ENCODE measurements at regions of chr5 and their contacts with region 1.

Region 1: DNA sequence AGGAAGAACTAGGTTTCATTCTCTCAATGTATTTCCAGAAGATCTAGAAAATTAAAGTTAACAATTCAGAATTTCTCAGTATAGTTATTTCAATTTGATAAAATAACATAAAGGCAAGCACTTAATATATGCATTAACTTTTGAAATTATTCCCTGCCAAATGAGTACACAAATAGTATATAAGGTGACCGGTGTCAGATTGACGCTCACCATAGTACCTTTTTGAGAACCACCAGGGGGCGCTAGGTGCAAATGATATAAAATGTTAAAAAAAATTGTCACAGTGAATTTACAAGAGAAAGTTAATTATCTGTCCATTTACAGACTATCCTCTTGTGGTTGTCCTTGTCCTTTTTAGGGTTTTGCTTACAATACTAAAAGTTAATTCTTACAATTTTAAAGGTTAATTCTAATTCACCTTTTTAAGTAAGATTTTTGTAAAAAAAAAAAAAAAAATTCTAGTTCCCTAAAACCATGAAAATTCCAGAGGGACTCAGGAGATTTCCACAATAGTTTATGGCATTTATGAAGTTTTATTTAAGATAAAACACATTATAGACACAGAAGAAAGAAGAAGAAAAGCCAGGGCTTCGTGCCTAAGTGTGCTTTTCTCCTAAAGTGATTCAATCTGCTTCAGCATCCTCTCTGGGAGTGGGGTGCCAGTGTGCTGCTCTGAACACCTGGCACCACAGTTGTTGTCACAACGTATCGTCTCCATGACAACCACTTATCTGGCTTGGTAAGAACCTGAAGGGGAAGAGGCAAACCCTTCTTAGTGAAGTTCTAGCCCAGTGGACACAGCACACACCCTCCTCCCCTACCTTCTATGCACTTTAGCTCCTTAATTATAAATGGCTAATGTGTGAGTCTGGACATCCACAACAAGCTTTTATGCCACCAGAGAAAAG is 1.7 kb downstream of the ADAMTS16 start:
- ATAC-seq: peak in 3 of 8 experiments; percentile 27 to 39 (median 35)
- H3K4me3 ChIP-seq: no peak overlapping the region
- H3K27ac ChIP-seq: no peak overlapping the region
- H3K4me1 ChIP-seq: peaks cover 4% of the 10 kb centered on the region in 2 donors

Region 2: GRCh38 chr5:4879693-4880303 is 262.1 kb before region 1 on chr5:
- in situ Hi-C with region 1: loop called in 5 of 9 experiments (anchors 10 to 25 kb)
- ATAC-seq: peak; percentile 63 to 94 (median 84)
- H3K4me3 ChIP-seq: no peak overlapping the region
- H3K27ac ChIP-seq: no peak overlapping the region
- H3K4me1 ChIP-seq: peaks cover 0 to 10% of the 10 kb centered on the region in 2 donors

Region 3: GRCh38 chr5:5398046-5398445 is 256.2 kb after region 1 on chr5:
- in situ Hi-C with region 1: loop called in 8 of 9 experiments (anchors 10 to 25 kb)
- ATAC-seq: peak in 1 of 8 experiments; percentile 10
- H3K4me3 ChIP-seq: no peak overlapping the region
- H3K27ac ChIP-seq: no peak overlapping the region
- H3K4me1 ChIP-seq: no peaks in the 10 kb centered on the region

Region 4: GRCh38 chr5:5409151-5409810 is 267.4 kb after region 1 on chr5:
- in situ Hi-C with region 1: loop called in 6 of 9 experiments (anchors 10 to 25 kb)
- ATAC-seq: peak in 2 of 8 experiments; percentile 26 to 34
- H3K4me3 ChIP-seq: no peak overlapping the region
- H3K27ac ChIP-seq: no peak overlapping the region
- H3K4me1 ChIP-seq: no peaks in the 10 kb centered on the region

Region 5: GRCh38 chr5:5421961-5422818 is 280.3 kb after region 1 on chr5 and contains the start of gene ICE1:
- in situ Hi-C with region 1: loop called in 6 of 9 experiments (anchors 10 to 25 kb)
- ATAC-seq: peak; percentile 91 to 96 (median 95)
- H3K4me3 ChIP-seq: peak within 1 kb of the TSS; percentile 71 to 93 (median 92)
- H3K27ac ChIP-seq: peak within 1 kb of the TSS; percentile 99 to 100
- H3K4me1 ChIP-seq: peaks cover 17 to 22% of the 10 kb centered on the region in 2 donors
- total RNA-seq, gene ICE1: 17.8 to 39.2 (median 26.0) TPM

Region 6: DNA sequence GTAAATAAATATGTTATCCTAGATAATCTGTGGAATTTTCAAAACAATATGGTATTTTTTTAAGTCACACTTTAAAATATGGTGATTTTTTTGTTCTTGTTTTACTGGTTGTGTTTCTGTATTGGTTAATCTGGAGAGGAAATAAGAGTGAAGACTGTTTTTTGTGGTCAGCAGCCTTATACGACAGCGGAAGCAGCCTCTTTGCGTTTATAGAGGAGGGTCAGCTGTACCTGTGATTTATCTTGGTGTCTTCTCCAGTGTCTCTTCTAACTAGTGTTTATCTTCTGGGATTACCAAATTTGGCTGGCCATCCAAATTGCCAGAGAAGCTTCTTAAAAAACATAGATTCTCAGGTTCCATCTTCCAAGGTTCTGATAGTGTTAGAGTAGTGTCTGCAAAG is 339.3 kb after region 1 on chr5:
- in situ Hi-C with region 1: no loop called
- ATAC-seq: no peak
- H3K4me3 ChIP-seq: no peak overlapping the region
- H3K27ac ChIP-seq: no peak overlapping the region
- H3K4me1 ChIP-seq: no peaks in the 10 kb centered on the region

Measured in motor neuron (in vitro differentiated cells).